WTC11 (cell line): ENCODE measurements at regions of chr16 and their contacts with region 1.

Region 1: DNA sequence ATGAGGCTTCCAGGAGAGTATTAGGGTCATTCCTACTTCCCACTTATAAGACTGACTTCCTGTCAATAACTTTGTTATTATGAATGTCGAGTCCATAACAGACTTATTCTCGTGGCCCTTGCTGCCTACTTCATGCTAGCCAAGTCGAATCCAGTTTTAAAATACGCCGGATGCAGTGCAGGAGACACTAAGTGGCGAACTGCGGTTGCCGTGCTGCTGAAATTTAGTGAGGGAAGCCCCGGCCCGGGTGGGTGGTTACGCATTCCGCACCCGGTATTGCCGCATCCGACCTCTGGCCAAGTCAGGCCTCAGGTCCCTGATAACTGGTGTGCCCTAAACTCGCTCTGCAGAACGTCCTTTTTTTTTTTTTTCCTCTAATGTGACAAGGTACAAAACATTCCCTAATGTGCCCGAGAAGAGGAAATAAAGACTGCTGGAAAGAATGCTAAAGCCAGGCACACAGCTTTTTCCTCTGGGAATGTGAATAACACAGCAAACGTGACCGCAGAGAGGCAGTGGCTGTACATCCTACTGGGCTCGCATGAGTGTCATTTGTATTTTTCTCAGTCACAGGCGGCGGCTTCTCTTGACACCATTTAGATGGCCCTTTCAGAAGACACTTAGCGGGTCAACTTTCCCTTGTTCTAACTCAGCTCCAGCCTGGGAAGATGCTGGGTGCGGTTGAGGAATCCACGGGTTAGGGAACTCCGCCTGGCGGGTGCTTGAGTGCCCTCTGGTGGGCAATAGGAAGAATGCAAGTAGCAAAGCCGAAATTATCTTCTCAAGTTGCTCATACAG is 7.1 kb upstream of the AKTIP start:
- DNase-seq: peak; percentile 57
- ATAC-seq: peak; percentile 89
- H3K4me3 Mint-ChIP-seq: no peak overlapping the region
- H3K27ac Mint-ChIP-seq: no peak overlapping the region
- H3K4me1 Mint-ChIP-seq: peaks cover 11% of the 10 kb centered on the region
- H3K27me3 Mint-ChIP-seq: no peaks in the 10 kb centered on the region
- CTCF ChIP-seq: peak; percentile 87

Region 2: GRCh38 chr16:53449632-53450517 is 60.2 kb before region 1 on chr16:
- CTCF ChIA-PET with region 1: interaction called, 10 read pairs
- POLR2A ChIA-PET with region 1: no interaction called
- DNase-seq: no peak
- ATAC-seq: no peak
- H3K4me3 Mint-ChIP-seq: no peak overlapping the region
- H3K27ac Mint-ChIP-seq: no peak overlapping the region
- H3K4me1 Mint-ChIP-seq: no peaks in the 10 kb centered on the region
- H3K27me3 Mint-ChIP-seq: no peaks in the 10 kb centered on the region
- CTCF ChIP-seq: no peak

Region 3: GRCh38 chr16:53495325-53495724 is 14.8 kb before region 1 on chr16:
- CTCF ChIA-PET with region 1: interaction called, 11 read pairs
- POLR2A ChIA-PET with region 1: no interaction called
- DNase-seq: peak; percentile 29
- ATAC-seq: peak; percentile 61; the same call in 1 of the 2 replicates
- H3K4me3 Mint-ChIP-seq: no peak overlapping the region
- H3K27ac Mint-ChIP-seq: no peak overlapping the region
- H3K4me1 Mint-ChIP-seq: no peaks in the 10 kb centered on the region
- H3K27me3 Mint-ChIP-seq: no peaks in the 10 kb centered on the region
- CTCF ChIP-seq: no peak

Region 4: GRCh38 chr16:53558710-53559109 is 48.6 kb after region 1 on chr16:
- CTCF ChIA-PET with region 1: no interaction called
- POLR2A ChIA-PET with region 1: no interaction called
- DNase-seq: no peak
- ATAC-seq: no peak
- H3K4me3 Mint-ChIP-seq: no peak overlapping the region
- H3K27ac Mint-ChIP-seq: no peak overlapping the region
- H3K4me1 Mint-ChIP-seq: peaks cover 48% of the 10 kb centered on the region
- H3K27me3 Mint-ChIP-seq: no peaks in the 10 kb centered on the region; the same call in 1 of the 2 replicates
- CTCF ChIP-seq: no peak